A549 (cell line): ENCODE measurements at regions of chr5 and their contacts with region 1.

Region 1: GRCh38 chr5:59390074-59390659 is 503.4 kb downstream of the PDE4D start:
- DNase-seq: peak in 1 of 2 experiments; percentile 48
- ATAC-seq: no peak
- H3K4me3 ChIP-seq: no peak overlapping the region
- H3K27ac ChIP-seq: peak overlapping the region; percentile 51 to 64; a peak in 3 of 6 replicates
- H3K4me1 ChIP-seq: peaks cover 54% of the 10 kb centered on the region
- CTCF ChIP-seq: peak; percentile 81
- EP300 ChIP-seq: no peak
- POLR2A ChIP-seq: no peak
- RAD21 ChIP-seq: peak; percentile 71 to 86

Region 2: DNA sequence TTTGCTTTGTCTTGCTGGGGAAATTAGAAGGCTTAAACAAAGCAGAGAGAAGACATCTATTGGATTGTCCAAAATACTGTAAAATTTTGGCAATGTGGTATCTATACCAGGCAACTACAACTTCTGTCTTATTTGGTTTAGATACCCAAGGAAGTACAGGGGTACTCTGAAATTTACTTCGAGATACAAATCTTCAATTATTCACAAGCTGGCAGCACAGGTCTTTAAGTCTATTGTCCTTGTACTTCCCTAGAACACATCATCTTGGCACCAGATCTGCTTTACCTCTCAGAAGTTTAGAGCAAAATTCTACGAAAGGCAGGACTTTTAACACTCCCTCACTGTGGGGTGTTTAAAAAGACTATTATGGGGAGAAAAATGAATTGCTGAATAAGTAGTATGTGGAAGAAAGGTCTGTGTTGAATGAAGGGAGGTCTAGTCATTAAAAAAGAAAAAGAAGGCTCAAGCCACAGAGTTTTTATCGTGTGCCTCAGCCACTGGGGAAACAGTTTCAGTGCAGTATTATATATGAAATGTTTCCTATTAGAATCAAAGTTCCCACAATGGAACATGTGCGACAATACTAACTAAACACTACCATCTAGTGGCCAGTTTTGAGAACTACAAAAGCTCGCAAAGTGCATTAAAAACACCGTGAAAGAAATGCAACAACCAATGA is 409.6 kb after region 1 on chr5:
- CTCF ChIA-PET with region 1: interaction called, 10 read pairs
- POLR2A ChIA-PET with region 1: no interaction called
- DNase-seq: peak; percentile 29 to 68
- ATAC-seq: peak; percentile 80 to 84
- H3K4me3 ChIP-seq: peak overlapping the region; percentile 22; the same call in 2 of the 3 replicates
- H3K27ac ChIP-seq: peak overlapping the region; percentile 90 to 95
- H3K4me1 ChIP-seq: peaks cover 48% of the 10 kb centered on the region
- CTCF ChIP-seq: peak; percentile 91
- EP300 ChIP-seq: no peak
- POLR2A ChIP-seq: no peak
- RAD21 ChIP-seq: peak; percentile 94 to 96

Region 3: DNA sequence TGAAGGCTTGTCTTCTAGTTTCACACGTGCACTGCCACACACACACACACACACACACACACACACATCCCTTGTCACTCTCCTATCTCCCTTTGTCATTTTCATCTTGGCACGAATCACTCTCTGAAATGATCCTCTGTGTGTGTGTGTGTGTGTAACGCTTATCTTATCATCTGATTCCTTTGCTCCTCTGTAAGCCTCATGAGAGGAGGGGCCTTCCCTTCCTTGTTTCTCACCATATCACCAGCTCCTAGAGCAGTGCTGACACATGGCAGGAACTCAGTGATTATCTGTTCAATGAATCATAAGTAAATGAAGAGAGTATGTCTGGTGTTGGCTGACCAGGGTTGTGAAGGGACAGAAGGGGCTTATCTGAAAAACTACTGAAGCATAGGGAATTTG is 450.0 kb after region 1 on chr5:
- CTCF ChIA-PET with region 1: no interaction called
- POLR2A ChIA-PET with region 1: no interaction called
- DNase-seq: no peak
- ATAC-seq: peak; percentile 24 to 36; a peak in 2 of 6 replicates
- H3K4me3 ChIP-seq: no peak overlapping the region
- H3K27ac ChIP-seq: no peak overlapping the region
- H3K4me1 ChIP-seq: no peaks in the 10 kb centered on the region
- CTCF ChIP-seq: no peak
- EP300 ChIP-seq: no peak
- POLR2A ChIP-seq: no peak
- RAD21 ChIP-seq: no peak